CD4-positive, alpha-beta memory T cell (primary cell): ENCODE measurements at regions of chr11 and their contacts with region 1.

Region 1: GRCh38 chr11:118046051-118046963 is 30.6 kb upstream of the TMPRSS4 start:
- DNase-seq: peak; percentile 66 to 83 (median 72)
- H3K4me3 ChIP-seq: peak overlapping the region in 1 of 2 donors; percentile 15
- H3K4me3 Mint-ChIP-seq: peak overlapping the region in 7 of 8 donors; percentile 17 to 82 (median 57)
- H3K27ac ChIP-seq: peak overlapping the region; percentile 75
- H3K27ac Mint-ChIP-seq: peak overlapping the region; percentile 81 to 99 (median 94)
- H3K4me1 ChIP-seq: peaks cover 99% of the 10 kb centered on the region
- H3K4me1 Mint-ChIP-seq: peaks cover 68 to 96% (median 85%) of the 10 kb centered on the region in 4 donors
- H3K27me3 ChIP-seq: no peaks in the 10 kb centered on the region
- H3K27me3 Mint-ChIP-seq: no peaks in the 10 kb centered on the region

Region 2: GRCh38 chr11:117970400-117971024 is 75.8 kb before region 1 on chr11:
- CTCF ChIA-PET with region 1: interaction called, 23 read pairs
- POLR2A ChIA-PET with region 1: interaction called, 11 read pairs
- intact Hi-C with region 1: no loop called
- DNase-seq: peak; percentile 33 to 75 (median 43)
- H3K4me3 ChIP-seq: peak overlapping the region; percentile 17 to 21
- H3K4me3 Mint-ChIP-seq: peak overlapping the region in 7 of 8 donors; percentile 59 to 89 (median 76)
- H3K27ac ChIP-seq: peak overlapping the region; percentile 27
- H3K27ac Mint-ChIP-seq: peak overlapping the region; percentile 76 to 91 (median 87)
- H3K4me1 ChIP-seq: peaks cover 66% of the 10 kb centered on the region
- H3K4me1 Mint-ChIP-seq: peaks cover 49 to 69% (median 62%) of the 10 kb centered on the region in 4 donors
- H3K27me3 ChIP-seq: no peaks in the 10 kb centered on the region
- H3K27me3 Mint-ChIP-seq: no peaks in the 10 kb centered on the region

Region 3: DNA sequence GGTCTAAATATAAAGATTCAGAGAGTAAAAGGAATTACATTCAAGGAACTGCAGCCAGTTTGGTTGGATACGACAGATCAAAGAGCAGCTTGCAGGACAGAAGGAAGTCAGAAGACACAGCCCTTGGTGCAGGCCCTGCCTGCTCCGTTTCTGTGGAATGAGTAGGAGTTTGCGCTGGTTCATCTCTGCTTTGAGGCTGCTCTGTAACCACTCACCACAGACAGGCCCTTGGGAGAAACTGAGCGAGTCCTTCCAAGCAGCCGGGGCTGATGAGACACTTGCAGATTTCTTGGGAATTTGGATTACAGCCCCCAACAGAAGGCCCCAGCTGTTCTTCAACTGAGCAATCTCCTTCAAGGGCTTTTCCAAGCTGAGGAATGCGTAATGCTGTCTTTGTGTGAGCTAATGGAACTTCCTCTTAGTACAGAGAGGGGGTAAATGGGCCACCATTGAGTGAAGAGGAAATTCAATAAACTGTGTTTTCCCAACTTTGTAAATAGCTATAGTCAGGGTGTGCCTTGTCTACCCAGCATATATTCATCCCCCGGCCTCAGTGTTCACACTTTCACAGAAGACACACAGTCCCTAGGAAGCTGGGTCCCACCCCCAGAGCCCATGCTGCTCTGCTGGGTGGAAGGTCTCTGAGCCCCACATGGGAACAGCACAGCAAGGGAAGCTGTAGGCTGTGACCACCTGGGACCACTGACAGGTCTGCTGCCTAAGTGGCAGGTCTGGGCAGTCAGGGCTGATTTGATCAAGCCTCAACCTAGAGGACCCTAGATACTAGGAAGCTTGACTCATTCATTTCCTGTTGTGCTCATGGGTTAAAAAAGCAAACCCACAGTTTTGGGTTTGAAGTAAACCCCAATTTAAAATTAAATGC is 43.5 kb before region 1 on chr11:
- CTCF ChIA-PET with region 1: interaction called, 211 read pairs
- POLR2A ChIA-PET with region 1: interaction called, 1,775 read pairs
- intact Hi-C with region 1: loop called (anchors 1 kb)
- DNase-seq: peak; percentile 26 to 68 (median 32)
- H3K4me3 ChIP-seq: peak overlapping the region; percentile 5 to 14
- H3K4me3 Mint-ChIP-seq: peak overlapping the region; percentile 56 to 82 (median 70)
- H3K27ac ChIP-seq: peak overlapping the region; percentile 53
- H3K27ac Mint-ChIP-seq: peak overlapping the region; percentile 86 to 96 (median 91)
- H3K4me1 ChIP-seq: peaks cover 100% of the 10 kb centered on the region
- H3K4me1 Mint-ChIP-seq: peaks cover 76 to 100% (median 95%) of the 10 kb centered on the region in 4 donors
- H3K27me3 ChIP-seq: no peaks in the 10 kb centered on the region
- H3K27me3 Mint-ChIP-seq: no peaks in the 10 kb centered on the region

Region 4: GRCh38 chr11:118027691-118028090 is 18.6 kb before region 1 on chr11:
- CTCF ChIA-PET with region 1: interaction called, 21 read pairs
- POLR2A ChIA-PET with region 1: interaction called, 5 read pairs
- intact Hi-C with region 1: loop called (anchors 2 kb)
- DNase-seq: no peak
- H3K4me3 ChIP-seq: no peak overlapping the region
- H3K4me3 Mint-ChIP-seq: no peak overlapping the region
- H3K27ac ChIP-seq: no peak overlapping the region
- H3K27ac Mint-ChIP-seq: no peak overlapping the region
- H3K4me1 ChIP-seq: peaks cover 13% of the 10 kb centered on the region
- H3K4me1 Mint-ChIP-seq: peaks cover 20 to 36% (median 25%) of the 10 kb centered on the region in 4 donors
- H3K27me3 ChIP-seq: no peaks in the 10 kb centered on the region
- H3K27me3 Mint-ChIP-seq: peaks cover 0 to 2% of the 10 kb centered on the region in 2 donors

Region 5: GRCh38 chr11:118184784-118185579 is 138.7 kb after region 1 on chr11:
- CTCF ChIA-PET with region 1: no interaction called
- POLR2A ChIA-PET with region 1: no interaction called
- intact Hi-C with region 1: no loop called
- DNase-seq: no peak
- H3K4me3 ChIP-seq: no peak overlapping the region
- H3K4me3 Mint-ChIP-seq: no peak overlapping the region
- H3K27ac ChIP-seq: no peak overlapping the region
- H3K27ac Mint-ChIP-seq: peak overlapping the region in 1 of 7 donors; percentile 39
- H3K4me1 ChIP-seq: no peaks in the 10 kb centered on the region
- H3K4me1 Mint-ChIP-seq: peaks cover 0 to 4% (median 0%) of the 10 kb centered on the region in 4 donors
- H3K27me3 ChIP-seq: no peaks in the 10 kb centered on the region
- H3K27me3 Mint-ChIP-seq: peaks cover 6 to 19% of the 10 kb centered on the region in 2 donors